MCF 10A (cell line): ENCODE measurements at regions of chr5 and their contacts with region 1.

Region 1: DNA sequence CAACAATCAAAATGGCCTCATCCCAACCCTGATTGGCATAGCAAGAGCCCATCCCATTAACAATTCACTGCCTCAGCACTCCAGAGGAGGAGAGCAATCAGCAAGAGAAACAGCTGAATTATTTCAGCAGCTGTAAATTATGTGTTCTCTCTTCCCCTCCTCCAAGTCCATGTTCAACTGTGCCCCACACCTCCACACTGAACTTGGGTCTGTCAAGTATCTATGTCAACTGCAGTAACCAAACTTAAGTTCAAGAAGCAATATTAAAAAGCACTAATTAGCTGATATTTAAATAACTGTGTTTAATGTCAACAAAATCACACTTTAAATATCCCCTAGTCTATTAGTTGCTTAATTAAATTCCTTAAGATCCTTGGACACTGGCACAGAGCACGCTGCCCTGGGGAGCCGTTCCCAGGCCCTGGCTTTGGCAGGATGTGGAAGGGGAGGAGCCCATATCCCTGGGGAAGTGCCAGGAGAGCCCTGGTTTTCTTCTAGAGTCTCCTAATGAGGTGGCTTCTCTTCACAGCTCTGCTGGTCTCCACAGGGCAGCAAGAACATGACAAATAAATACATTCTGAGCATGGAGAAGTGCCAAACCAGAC is 50.6 kb downstream of the SIL1 start:
- DNase-seq: peak; percentile 94
- H3K4me3 Mint-ChIP-seq: no peak overlapping the region
- H3K27ac Mint-ChIP-seq: no peak overlapping the region
- H3K4me1 Mint-ChIP-seq: peaks cover 33% of the 10 kb centered on the region
- H3K27me3 Mint-ChIP-seq: no peaks in the 10 kb centered on the region
- CTCF ChIP-seq: no peak

Region 2: GRCh38 chr5:139104577-139105276 is 42.9 kb before region 1 on chr5:
- CTCF ChIA-PET with region 1: no interaction called
- POLR2A ChIA-PET with region 1: no interaction called
- intact Hi-C with region 1: no loop called
- DNase-seq: peak; percentile 90
- H3K4me3 Mint-ChIP-seq: peak overlapping the region; percentile 26
- H3K27ac Mint-ChIP-seq: peak overlapping the region; percentile 79
- H3K4me1 Mint-ChIP-seq: peaks cover 25% of the 10 kb centered on the region
- H3K27me3 Mint-ChIP-seq: no peaks in the 10 kb centered on the region
- CTCF ChIP-seq: no peak

Region 3: GRCh38 chr5:139167952-139168730 is 20.6 kb after region 1 on chr5:
- CTCF ChIA-PET with region 1: interaction called, 6 read pairs
- POLR2A ChIA-PET with region 1: interaction called, 12 read pairs
- intact Hi-C with region 1: no loop called
- DNase-seq: no peak
- H3K4me3 Mint-ChIP-seq: no peak overlapping the region
- H3K27ac Mint-ChIP-seq: no peak overlapping the region
- H3K4me1 Mint-ChIP-seq: peaks cover 24% of the 10 kb centered on the region
- H3K27me3 Mint-ChIP-seq: no peaks in the 10 kb centered on the region
- CTCF ChIP-seq: no peak